Calu3 (cell line): ENCODE measurements at regions of chr20 and their contacts with region 1.

Region 1: DNA sequence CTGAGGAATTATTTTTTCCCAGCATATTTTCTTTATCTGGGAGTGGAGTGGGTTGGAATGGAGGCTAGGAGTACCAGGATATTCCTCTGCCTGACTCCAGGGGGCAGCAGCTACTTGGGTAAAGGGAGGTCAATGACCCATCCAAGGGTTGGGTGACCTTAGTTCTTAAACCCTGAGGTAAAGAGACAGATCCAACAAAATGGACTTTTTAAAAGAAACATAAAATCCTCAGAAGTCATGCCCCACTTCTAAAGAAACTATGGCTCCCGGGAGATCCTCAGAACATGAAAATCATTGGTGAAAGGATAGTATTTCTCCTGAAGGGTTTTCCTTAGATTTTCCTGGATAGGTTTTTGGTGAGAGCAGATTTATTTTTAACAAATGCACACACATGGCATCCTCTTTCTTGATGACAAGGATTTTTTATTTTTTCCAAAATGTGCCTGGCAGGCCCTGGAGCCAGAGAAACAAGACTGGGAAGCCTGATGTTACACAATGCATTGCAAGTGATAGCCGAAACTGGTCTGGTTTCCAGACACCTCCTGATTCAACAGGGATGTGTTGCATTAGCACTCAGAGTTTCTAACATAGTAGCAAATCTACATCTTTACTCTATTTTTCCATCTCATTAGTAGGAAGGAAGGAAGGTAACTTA is 240.9 kb upstream of the BTBD3 start:
- DNase-seq: peak; percentile 61
- H3K4me3 Mint-ChIP-seq: no peak overlapping the region
- H3K27ac Mint-ChIP-seq: no peak overlapping the region
- H3K4me1 Mint-ChIP-seq: no peaks in the 10 kb centered on the region
- H3K27me3 Mint-ChIP-seq: peaks cover 13% of the 10 kb centered on the region
- CTCF ChIP-seq: peak; percentile 65

Region 2: DNA sequence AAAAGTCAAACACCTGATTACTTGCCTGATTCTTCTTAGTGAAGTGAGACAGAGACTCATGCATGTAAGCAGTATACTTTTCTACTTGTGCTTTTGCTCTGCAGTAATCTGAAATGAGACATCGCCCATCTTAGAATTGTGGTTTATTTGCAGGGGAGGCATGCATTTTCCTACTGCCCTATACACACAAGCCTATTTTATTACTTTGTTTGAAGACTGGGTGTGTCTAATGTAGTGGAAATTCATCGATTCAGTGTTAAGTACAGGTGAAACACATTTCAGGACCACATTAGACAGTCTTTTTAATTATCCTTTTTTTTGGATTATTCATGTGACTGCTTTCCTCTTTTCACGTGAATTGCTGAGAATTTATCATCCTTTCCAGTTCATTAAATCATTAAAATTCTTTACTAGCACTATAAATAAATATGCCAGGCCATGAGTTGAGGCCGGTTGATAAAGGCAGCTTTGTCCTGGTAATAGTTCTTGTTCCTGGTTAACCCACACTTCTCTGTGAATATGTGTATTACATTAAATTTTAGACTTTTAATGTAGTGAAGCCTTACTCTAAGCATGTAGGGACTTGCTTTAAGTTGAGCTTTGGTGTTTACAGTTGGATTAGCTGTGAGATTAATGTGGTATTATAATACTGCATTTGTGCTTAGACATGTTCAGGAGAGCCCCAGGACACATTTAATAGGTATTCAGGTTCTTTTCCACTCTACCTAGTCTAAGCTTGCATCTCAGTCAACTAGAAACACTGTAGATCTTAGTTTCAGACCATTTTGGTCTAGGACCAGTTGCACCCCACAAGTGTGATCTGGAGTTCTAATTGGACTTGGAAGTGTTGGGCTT is 230.1 kb after region 1 on chr20:
- CTCF ChIA-PET with region 1: no interaction called
- intact Hi-C with region 1: loop called (anchors 5 kb)
- DNase-seq: no peak
- H3K4me3 Mint-ChIP-seq: no peak overlapping the region
- H3K27ac Mint-ChIP-seq: no peak overlapping the region
- H3K4me1 Mint-ChIP-seq: peaks cover 23% of the 10 kb centered on the region
- H3K27me3 Mint-ChIP-seq: no peaks in the 10 kb centered on the region
- CTCF ChIP-seq: no peak